ENCODE measurements at regions of chr9 and their contacts with region 1.

Region 1: GRCh38 chr9:115250621-115251032 is 132.7 kb upstream of the TNC start:
- DNase-seq: no peak
- CTCF ChIP-seq: no peak

Region 2: DNA sequence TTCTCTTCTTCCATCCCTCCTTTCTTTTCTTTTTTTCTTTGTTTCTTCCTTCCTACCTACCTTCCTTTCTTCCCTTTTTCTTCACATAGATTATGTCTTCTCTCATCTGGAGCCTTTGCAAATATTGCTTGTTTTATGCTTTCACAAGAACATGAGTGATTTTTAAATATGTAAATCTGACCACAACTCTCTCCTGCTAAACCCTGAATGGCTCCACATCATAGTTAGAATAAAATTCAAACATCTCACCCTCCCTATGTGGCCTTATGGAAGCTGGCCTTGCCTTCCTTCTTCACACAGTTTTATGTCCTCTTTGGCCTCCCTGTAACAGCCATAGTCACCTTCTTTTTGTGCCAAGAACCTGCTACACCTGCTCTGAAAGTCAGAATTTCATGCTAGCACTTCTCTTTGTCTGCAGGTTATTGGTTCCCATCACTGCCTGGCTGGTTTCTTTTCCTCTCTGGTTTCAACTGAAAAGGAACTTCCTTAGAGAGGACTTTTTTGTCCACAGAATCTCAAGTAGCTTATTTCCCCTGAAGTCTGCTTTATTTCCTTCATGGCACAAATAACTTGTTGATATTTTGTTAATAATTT is 18.3 kb before region 1 on chr9:
- CTCF ChIA-PET with region 1: interaction called, 11 read pairs
- POLR2A ChIA-PET with region 1: no interaction called
- DNase-seq: no peak
- CTCF ChIP-seq: no peak